ENCODE measurements at regions of chr5 and their contacts with region 1.

Region 1: DNA sequence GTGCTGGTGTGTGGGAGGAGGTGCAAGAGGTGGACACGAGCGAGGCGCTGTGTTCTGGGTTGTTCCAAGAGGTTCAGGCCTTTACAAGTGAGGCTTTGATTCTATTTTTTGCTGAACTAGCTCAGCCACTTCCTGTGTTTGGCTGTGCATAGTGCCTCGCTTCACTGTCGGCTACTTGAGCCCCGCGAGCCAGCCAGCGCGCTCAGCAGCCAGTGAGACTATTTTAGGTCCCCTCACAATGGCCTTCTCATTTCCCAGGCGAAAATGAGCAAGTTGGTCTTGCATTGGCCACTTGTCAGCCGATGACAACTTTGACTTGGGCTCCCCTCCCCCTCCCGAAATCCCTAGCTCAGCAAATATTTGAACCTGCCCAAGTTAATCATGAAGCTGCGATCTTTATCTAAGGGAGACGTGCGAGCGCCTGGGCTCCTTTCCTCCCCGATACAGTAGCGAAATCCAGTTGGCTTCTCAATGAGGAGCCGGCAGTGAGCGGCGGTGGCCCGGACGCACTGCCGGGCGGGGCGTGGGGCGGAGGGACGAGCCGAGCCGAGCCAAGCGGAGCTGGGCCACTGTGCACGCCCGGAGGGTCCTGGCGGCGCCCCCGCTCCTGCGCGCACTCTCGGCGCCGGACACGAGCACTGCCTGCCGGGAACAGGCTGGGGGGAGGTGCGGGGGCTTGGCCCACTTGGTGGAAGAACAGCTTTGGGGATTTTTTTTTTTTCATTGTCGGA is 72.6 kb downstream of the PIK3R1 start:
- DNase-seq: peak; percentile 19 to 81 (median 34)
- ATAC-seq: peak; percentile 73
- H3K4me3 ChIP-seq: peak overlapping the region; percentile 65
- H3K4me3 Mint-ChIP-seq: peak overlapping the region; percentile 94
- H3K27ac ChIP-seq: peak overlapping the region; percentile 45 to 52
- H3K27ac Mint-ChIP-seq: peak overlapping the region; percentile 91
- H3K4me1 ChIP-seq: peaks cover 46% of the 10 kb centered on the region
- H3K4me1 Mint-ChIP-seq: peaks cover 93% of the 10 kb centered on the region
- H3K27me3 ChIP-seq: no peaks in the 10 kb centered on the region
- H3K27me3 Mint-ChIP-seq: no peaks in the 10 kb centered on the region
- CTCF ChIP-seq: no peak

Region 2: DNA sequence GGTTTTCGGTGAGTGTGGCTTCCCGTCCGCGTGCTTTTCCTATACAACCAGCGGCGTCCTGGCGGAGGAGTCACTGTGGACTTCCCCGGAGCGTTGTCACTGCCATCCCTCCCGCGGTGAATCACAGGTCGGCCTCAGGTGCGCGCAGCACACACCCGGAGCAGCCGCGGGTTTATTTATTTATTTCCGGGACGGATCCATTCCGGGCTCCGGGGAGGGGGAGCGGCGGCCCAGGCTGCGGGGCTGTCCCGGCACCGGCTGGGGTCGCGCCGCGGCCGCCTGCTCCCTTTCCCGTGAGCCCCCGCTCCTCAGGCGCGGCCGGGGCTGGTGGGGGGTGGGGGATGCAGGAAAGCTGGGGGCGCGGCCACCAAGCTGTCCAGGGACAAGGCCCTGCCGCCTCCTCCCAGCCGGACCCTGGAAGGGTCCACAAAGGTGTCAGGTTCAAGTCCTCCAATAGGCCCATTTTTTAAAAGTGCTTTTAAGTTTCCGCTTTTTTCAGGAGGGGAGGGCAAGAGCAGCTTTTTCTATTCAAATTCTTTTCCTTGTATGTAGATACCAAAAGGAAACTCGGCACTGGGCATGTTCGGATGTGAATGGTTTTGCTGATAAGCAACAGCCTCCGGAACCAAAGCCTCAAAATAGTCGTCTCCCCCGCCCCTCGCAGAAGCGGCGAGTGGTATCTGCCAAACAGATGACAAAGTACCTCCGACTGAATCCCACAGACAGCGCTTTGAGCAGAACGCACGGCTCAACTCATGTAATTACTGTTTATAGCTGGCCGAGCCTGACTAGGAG is 1284.0 kb before region 1 on chr5:
- CTCF ChIA-PET with region 1: no interaction called
- POLR2A ChIA-PET with region 1: no interaction called
- intact Hi-C with region 1: loop called in 1 of 2 experiments (anchors 10 kb)
- DNase-seq: peak; percentile 76 to 95 (median 86)
- ATAC-seq: peak; percentile 81
- H3K4me3 ChIP-seq: peak overlapping the region; percentile 67
- H3K4me3 Mint-ChIP-seq: peak overlapping the region; percentile 94
- H3K27ac ChIP-seq: peak overlapping the region; percentile 69 to 77
- H3K27ac Mint-ChIP-seq: peak overlapping the region; percentile 96
- H3K4me1 ChIP-seq: peaks cover 23% of the 10 kb centered on the region
- H3K4me1 Mint-ChIP-seq: peaks cover 57% of the 10 kb centered on the region
- H3K27me3 ChIP-seq: no peaks in the 10 kb centered on the region
- H3K27me3 Mint-ChIP-seq: no peaks in the 10 kb centered on the region
- CTCF ChIP-seq: no peak

Region 3: DNA sequence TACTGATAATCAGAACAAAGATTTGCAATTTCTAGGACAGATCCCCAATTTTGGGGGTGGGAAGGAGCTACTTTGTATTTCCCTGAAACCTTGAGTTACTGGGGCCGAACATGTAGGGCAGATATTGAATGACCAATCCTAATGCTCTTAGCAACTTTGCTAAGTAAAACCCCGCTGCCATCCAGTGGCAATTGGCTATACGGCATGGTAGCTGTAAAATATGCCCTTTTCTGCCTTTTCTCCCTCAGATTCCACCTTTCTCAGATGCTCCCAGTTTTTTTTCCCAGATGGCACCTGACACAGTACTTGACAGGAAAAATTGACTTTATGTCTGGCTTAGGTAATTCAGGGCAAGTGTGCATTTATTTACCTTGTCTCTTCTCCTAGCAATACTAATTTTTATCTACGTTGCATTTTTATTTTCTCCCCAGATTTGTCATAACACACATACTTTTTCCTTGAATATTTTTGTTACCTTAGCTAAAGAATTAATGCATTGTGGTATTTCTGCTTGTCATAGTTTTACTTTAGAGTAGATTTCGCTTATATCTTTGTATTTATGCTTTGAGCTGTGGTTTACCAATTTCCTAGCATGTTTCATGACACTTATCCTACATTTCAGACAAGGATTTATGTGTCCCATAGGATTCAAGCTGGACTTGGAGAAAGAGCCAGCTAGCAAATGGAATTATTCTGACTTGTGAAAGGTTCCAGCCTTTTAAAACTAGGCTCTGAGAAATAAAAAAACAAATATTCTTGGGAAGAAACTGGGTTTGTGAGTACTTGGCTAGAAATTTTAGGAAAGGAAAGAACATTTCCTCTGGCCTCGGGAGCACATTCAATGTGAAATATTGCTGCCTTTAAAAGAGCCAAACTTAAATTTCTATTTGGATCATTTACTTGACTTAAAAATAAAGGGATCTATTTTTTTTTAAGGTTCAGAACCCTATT is 35.2 kb before region 1 on chr5:
- CTCF ChIA-PET with region 1: interaction called, 5 read pairs
- POLR2A ChIA-PET with region 1: interaction called, 7 read pairs
- intact Hi-C with region 1: loop called in 1 of 2 experiments (anchors 5 kb)
- DNase-seq: peak; percentile 16 to 76 (median 42)
- ATAC-seq: no peak
- H3K4me3 ChIP-seq: no peak overlapping the region
- H3K4me3 Mint-ChIP-seq: peak overlapping the region; percentile 49
- H3K27ac ChIP-seq: no peak overlapping the region
- H3K27ac Mint-ChIP-seq: peak overlapping the region; percentile 82
- H3K4me1 ChIP-seq: peaks cover 54% of the 10 kb centered on the region
- H3K4me1 Mint-ChIP-seq: peaks cover 95% of the 10 kb centered on the region
- H3K27me3 ChIP-seq: no peaks in the 10 kb centered on the region
- H3K27me3 Mint-ChIP-seq: no peaks in the 10 kb centered on the region
- CTCF ChIP-seq: peak; percentile 71

Region 4: DNA sequence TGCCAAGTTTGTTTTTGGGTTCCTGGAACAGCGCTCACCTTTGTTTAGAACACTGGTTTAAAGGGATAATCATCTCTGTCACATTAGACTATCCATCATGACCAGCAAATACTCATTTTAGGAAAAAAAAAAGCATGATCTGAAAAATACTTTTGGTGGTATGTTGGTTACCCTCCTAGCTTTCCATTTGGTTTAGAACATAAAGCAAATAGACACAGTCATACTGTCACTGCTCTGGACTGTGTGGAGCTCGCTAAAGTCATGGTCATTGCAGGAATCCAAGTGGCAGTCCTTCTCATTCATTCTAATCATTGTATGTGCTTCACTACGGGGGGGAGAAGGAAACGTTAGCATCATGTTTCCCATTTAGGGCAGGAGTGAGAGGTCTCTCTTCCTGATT is 11.0 kb after region 1 on chr5:
- CTCF ChIA-PET with region 1: interaction called, 16 read pairs
- POLR2A ChIA-PET with region 1: interaction called, 8 read pairs
- intact Hi-C with region 1: no loop called
- DNase-seq: no peak
- ATAC-seq: no peak
- H3K4me3 ChIP-seq: no peak overlapping the region
- H3K4me3 Mint-ChIP-seq: no peak overlapping the region
- H3K27ac ChIP-seq: no peak overlapping the region
- H3K27ac Mint-ChIP-seq: peak overlapping the region; percentile 19
- H3K4me1 ChIP-seq: no peaks in the 10 kb centered on the region
- H3K4me1 Mint-ChIP-seq: peaks cover 11% of the 10 kb centered on the region
- H3K27me3 ChIP-seq: no peaks in the 10 kb centered on the region
- H3K27me3 Mint-ChIP-seq: no peaks in the 10 kb centered on the region
- CTCF ChIP-seq: no peak

Region 5: GRCh38 chr5:68460147-68460798 is 172.1 kb after region 1 on chr5:
- CTCF ChIA-PET with region 1: interaction called, 6 read pairs
- POLR2A ChIA-PET with region 1: interaction called, 3 read pairs
- intact Hi-C with region 1: loop called (anchors 1 kb)
- DNase-seq: peak in 11 of 14 experiments; percentile 8 to 80 (median 26)
- ATAC-seq: peak; percentile 63
- H3K4me3 ChIP-seq: no peak overlapping the region
- H3K4me3 Mint-ChIP-seq: no peak overlapping the region
- H3K27ac ChIP-seq: no peak overlapping the region
- H3K27ac Mint-ChIP-seq: no peak overlapping the region
- H3K4me1 ChIP-seq: peaks cover 16% of the 10 kb centered on the region
- H3K4me1 Mint-ChIP-seq: peaks cover 21% of the 10 kb centered on the region
- H3K27me3 ChIP-seq: no peaks in the 10 kb centered on the region
- H3K27me3 Mint-ChIP-seq: no peaks in the 10 kb centered on the region
- CTCF ChIP-seq: peak; percentile 83

Region 6: DNA sequence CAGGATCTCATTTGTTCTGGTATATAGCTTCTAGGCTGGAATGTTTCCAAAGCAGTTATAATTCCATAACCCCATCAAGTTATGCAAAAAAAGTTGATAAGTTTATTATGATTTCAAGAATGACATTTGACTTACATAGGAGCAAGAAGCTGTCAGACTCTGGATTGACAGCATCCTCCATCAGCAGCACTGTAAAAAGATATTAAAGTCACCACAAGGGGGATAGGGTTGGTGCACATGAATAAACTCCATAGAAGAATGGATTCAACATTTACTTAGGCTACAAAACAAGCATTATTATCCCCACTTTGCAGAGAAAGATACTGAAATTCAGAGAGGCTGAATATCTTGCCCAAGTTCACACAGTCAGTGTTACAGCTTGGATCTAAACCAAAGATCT is 596.7 kb after region 1 on chr5:
- CTCF ChIA-PET with region 1: no interaction called
- POLR2A ChIA-PET with region 1: no interaction called
- intact Hi-C with region 1: loop called (anchors 10 kb)
- DNase-seq: peak in 2 of 14 experiments; percentile 25 to 35
- ATAC-seq: peak; percentile 49
- H3K4me3 ChIP-seq: no peak overlapping the region
- H3K4me3 Mint-ChIP-seq: peak overlapping the region; percentile 15
- H3K27ac ChIP-seq: no peak overlapping the region
- H3K27ac Mint-ChIP-seq: no peak overlapping the region
- H3K4me1 ChIP-seq: peaks cover 11% of the 10 kb centered on the region
- H3K4me1 Mint-ChIP-seq: peaks cover 40% of the 10 kb centered on the region
- H3K27me3 ChIP-seq: no peaks in the 10 kb centered on the region
- H3K27me3 Mint-ChIP-seq: no peaks in the 10 kb centered on the region
- CTCF ChIP-seq: no peak

Region 7: DNA sequence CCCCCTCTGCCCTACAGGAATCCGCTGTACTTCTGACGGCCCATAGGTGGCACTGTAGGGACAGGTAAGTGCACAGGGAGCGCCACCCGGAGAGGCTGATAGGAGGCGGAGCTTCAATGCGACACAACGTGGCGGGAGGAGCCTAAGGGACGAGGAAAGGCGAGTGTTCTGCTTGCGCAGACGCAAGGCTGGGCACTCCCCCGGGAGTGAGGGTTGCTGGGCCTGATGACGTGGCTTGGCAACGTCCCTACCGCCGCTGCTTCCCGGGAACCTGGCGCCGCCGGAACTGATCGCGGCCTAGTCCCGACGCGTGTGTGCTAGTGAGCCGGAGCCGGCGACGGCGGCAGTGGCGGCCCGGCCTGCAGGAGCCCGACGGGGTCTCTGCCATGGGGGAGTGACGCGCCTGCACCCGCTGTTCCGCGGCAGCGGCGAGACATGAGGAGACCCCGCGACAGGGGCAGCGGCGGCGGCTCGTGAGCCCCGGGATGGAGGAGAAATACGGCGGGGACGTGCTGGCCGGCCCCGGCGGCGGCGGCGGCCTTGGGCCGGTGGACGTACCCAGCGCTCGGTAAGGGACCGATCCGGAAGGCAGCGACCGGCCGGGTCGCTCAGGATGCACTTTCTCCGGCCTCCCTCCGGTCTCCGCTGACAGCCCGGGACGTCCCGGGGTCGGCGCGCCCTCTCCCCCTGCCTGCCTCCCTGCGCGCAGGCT is 805.8 kb after region 1 on chr5 and contains the start of gene SLC30A5:
- CTCF ChIA-PET with region 1: no interaction called
- POLR2A ChIA-PET with region 1: no interaction called
- intact Hi-C with region 1: loop called in 1 of 2 experiments (anchors 10 kb)
- DNase-seq: peak; percentile 95 to 100 (median 97)
- ATAC-seq: peak; percentile 97
- H3K4me3 ChIP-seq: peak within 1 kb of the TSS; percentile 73
- H3K4me3 Mint-ChIP-seq: peak within 1 kb of the TSS; percentile 88
- H3K27ac ChIP-seq: peak within 1 kb of the TSS; percentile 77 to 90
- H3K27ac Mint-ChIP-seq: peak within 1 kb of the TSS; percentile 98
- H3K4me1 ChIP-seq: peaks cover 26% of the 10 kb centered on the region
- H3K4me1 Mint-ChIP-seq: peaks cover 45% of the 10 kb centered on the region
- H3K27me3 ChIP-seq: no peaks in the 10 kb centered on the region
- H3K27me3 Mint-ChIP-seq: no peaks in the 10 kb centered on the region
- CTCF ChIP-seq: peak; percentile 80
- total RNA-seq, gene SLC30A5: 16.9 to 17.2 TPM